Colonic mucosa (tissue), 4 donors: ENCODE measurements at regions of chr4 and their contacts with region 1.

Region 1: DNA sequence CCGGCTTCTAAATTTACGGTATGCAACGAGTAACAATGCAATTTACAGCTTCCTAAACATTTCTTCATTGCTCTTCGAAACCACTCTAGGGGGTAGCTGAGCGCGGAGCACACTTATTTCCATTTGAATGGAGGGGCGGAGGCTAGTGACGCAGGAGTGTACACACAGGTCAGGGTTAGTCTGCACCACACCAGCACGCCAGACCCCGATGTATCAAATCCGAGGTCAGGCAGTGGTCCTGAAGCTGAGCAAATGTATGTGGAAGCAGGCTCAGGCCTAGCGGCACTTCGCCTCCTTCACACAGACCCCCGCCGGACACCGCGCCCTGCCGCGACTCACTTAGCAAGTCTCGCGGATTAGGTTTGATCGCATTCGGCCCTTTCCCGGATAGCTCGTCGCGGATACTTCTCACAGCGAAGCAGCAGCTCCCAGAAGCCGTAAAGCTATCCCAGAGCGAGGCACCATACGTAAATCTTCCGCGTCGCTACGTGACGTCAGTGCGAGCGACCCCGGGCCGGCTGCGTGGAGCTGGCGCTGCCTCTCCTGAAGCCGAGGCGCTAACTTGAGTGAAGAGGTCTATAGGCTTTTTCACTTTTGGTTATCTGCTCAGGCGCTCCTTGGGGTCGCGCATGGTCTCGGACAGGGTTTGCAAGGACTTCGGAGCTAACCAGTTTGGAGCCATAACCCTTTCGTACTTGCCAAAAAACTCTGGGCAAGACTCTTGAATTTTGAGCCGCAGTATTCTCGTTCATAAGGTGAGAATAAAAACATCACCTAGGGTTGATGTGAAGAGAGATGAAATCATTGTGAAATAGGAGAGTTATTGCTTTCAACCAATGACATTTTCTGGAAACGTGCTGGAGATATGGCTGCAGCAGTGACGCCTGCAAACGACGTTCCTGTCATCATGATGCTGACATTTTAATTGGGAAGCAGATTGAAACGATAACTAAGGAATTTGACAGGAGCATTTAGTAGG is at the start of gene AASDH:
- DNase-seq: peak; percentile 95
- H3K4me3 ChIP-seq: peak within 1 kb of the TSS; percentile 61
- H3K27ac ChIP-seq: peak within 1 kb of the TSS; percentile 95
- H3K4me1 ChIP-seq: peaks cover 3% of the 10 kb centered on the region
- H3K27me3 ChIP-seq: no peaks in the 10 kb centered on the region
- CTCF ChIP-seq: no peak
- total RNA-seq, gene AASDH: 7.4 to 7.8 TPM

Region 2: DNA sequence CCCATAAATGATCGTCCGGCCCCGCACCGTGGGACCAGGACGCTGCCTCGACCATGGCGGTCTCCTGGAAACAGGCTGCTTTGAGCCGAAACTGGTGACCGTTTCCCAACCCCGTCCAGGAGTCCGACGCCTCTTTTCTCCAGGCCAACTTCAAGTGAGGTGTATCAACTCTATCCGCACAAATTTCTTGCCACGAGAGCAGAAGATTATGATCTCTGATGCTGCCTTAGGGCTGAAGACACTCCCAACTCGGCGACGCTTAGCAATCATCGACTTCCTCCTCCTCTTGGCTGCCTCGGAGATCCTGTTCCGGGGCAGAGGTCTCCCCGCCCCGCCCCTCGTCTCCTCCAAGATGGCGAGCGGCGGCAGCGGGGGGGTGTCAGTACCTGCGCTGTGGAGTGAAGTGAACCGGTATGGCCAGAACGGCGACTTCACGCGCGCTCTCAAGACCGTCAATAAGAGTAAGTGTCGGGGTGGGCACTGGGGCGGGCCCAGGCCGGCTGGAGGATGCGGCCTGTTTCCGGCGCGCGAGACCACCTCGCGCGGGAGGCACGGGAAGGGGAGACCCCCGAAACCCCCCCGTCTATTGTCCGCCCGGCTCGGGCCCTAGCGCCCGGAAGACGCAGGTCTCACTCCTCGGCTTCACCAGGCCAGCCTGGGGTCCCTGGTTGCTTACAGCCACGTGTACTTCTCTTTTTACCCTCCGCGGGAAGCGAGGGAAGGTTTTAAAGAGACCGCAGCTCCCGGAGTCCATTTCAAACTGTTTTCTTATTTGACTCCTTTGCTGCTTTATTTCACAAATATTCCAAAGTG is 80.2 kb after region 1 on chr4 and contains the start of gene SRP72:
- intact Hi-C with region 1: loop called (anchors 5 kb)
- DNase-seq: peak; percentile 92
- H3K4me3 ChIP-seq: peak within 1 kb of the TSS; percentile 88
- H3K27ac ChIP-seq: peak within 1 kb of the TSS; percentile 91
- H3K4me1 ChIP-seq: peaks cover 8% of the 10 kb centered on the region
- H3K27me3 ChIP-seq: no peaks in the 10 kb centered on the region
- CTCF ChIP-seq: no peak
- total RNA-seq, gene SRP72: 74.4 to 79.6 TPM

Region 3: GRCh38 chr4:56505269-56506130 is 118.2 kb after region 1 on chr4 and contains the start of gene ARL9:
- intact Hi-C with region 1: no loop called
- DNase-seq: peak; percentile 54
- H3K4me3 ChIP-seq: peak within 1 kb of the TSS; percentile 47
- H3K27ac ChIP-seq: peak within 1 kb of the TSS; percentile 7
- H3K4me1 ChIP-seq: no peaks in the 10 kb centered on the region
- H3K27me3 ChIP-seq: no peaks in the 10 kb centered on the region
- CTCF ChIP-seq: no peak
- total RNA-seq, gene ARL9: 0.17 to 0.29 TPM

Region 4: GRCh38 chr4:56552273-56552672 is 165.0 kb after region 1 on chr4:
- intact Hi-C with region 1: no loop called
- DNase-seq: no peak
- H3K4me3 ChIP-seq: no peak overlapping the region
- H3K27ac ChIP-seq: no peak overlapping the region
- H3K4me1 ChIP-seq: no peaks in the 10 kb centered on the region
- H3K27me3 ChIP-seq: no peaks in the 10 kb centered on the region
- CTCF ChIP-seq: no peak

Region 5: DNA sequence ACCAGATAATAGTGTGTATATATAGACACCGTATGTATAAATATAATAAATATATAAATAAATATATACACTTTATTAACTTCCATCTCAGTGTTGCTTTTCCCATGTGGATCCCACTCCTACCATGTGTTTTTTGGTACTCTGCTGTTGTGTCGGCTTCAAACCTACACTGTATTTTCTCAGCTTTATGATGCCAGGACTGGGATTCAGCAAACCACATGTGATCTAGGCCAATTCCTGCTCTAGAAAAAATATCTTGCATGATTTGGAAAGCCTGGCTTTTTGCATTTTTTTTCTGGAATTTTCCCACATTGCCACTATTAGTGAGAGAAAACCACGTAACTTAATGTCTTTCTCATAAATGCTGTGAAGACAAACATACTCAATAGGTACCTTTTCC is 647.2 kb after region 1 on chr4:
- intact Hi-C with region 1: no loop called
- DNase-seq: no peak
- H3K4me3 ChIP-seq: no peak overlapping the region
- H3K27ac ChIP-seq: no peak overlapping the region
- H3K4me1 ChIP-seq: no peaks in the 10 kb centered on the region
- H3K27me3 ChIP-seq: no peaks in the 10 kb centered on the region
- CTCF ChIP-seq: no peak